Endothelial cell of umbilical vein (primary cell): ENCODE measurements at regions of chr13 and their contacts with region 1.

Region 1: GRCh38 chr13:113816946-113817859 is 46.7 kb downstream of the GAS6 start:
- DNase-seq: peak; percentile 91
- H3K4me3 ChIP-seq: no peak overlapping the region
- H3K27ac ChIP-seq: peak overlapping the region; percentile 34
- H3K4me1 ChIP-seq: peaks cover 6% of the 10 kb centered on the region
- H3K27me3 ChIP-seq: no peaks in the 10 kb centered on the region
- CTCF ChIP-seq: peak; percentile 70 to 93
- POLR2A ChIP-seq: no peak

Region 2: DNA sequence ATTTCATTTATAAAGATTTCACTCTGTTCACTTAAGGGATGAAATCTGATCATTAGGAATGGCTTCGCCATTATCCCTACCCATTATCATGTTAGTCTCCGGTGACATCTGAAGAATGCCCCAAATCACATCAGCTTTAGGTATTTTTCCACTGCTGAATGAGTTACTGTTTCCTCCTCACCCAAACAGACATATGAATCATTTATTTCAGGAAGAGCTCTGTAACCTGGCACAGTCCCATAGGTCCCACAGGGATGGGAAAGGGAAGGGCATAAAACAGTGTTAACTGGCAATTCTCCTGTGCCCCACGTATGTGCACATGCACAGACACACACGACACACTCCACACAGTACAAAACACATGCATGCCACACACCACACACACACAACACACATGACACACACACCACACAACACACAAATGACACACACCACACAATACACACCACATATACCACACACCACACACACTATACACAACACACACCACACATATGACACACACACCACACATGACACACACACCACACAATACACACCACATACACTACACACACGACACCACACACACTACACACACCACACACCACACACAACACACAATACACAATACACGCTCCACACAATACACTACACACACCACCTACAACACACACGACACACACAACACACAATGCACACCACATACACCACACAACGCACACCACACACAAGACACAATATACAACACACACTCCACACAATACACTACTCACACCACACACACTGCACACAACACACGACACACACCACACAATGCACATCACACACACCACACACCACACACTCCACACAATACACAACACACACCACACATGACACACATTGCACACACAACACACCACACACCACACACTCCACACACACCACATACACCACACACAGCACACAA is 42.8 kb before region 1 on chr13:
- CTCF ChIA-PET with region 1: no interaction called
- POLR2A ChIA-PET with region 1: no interaction called
- dilution Hi-C with region 1: no loop called
- intact Hi-C with region 1: no loop called
- DNase-seq: peak; percentile 95
- H3K4me3 ChIP-seq: no peak overlapping the region
- H3K27ac ChIP-seq: peak overlapping the region; percentile 38
- H3K4me1 ChIP-seq: peaks cover 39% of the 10 kb centered on the region
- H3K27me3 ChIP-seq: no peaks in the 10 kb centered on the region
- CTCF ChIP-seq: no peak
- POLR2A ChIP-seq: no peak

Region 3: DNA sequence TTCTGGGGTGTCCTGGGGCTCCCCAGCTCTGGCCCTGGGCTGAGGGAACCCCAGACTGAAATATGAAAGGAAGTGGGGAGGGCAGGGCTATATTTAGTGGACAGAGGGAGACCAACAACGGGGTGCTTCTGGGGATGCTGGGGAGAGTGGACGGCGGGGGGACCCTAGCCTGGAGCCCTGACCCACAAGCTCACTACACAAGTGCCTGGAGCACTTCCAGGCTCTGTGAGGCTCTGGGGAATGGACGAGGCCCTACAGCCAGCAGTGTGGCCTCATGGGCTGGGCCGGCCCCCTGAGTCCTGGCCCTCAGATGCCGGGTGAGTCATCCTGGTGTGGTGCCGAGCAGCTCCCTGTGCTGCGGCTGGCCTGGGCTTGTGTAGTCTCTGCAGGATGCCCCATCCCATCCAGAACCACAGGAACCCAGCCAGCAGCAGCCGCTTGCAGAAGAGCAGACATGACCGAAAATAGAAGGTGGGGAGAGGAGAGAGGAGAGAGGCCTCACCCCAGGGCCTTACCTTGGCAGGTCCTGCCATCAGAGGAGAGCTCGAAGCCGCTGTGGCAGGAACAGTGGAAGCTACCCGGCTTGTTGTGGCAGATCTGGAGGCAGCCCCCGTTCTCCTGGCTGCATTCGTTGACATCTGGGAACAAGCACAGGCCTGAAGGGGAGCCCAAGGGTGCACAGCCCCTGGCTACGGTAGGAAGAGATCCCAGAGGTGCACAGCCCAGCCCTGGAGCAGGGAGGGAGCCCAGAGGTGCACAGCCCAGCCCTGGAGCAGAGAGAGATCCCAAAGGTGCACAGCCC is 20.6 kb after region 1 on chr13:
- CTCF ChIA-PET with region 1: interaction called, 4 read pairs
- POLR2A ChIA-PET with region 1: no interaction called
- dilution Hi-C with region 1: no loop called
- intact Hi-C with region 1: loop called (anchors 1 kb)
- DNase-seq: peak; percentile 92
- H3K4me3 ChIP-seq: no peak overlapping the region
- H3K27ac ChIP-seq: peak overlapping the region; percentile 90
- H3K4me1 ChIP-seq: peaks cover 13% of the 10 kb centered on the region
- H3K27me3 ChIP-seq: no peaks in the 10 kb centered on the region
- CTCF ChIP-seq: no peak
- POLR2A ChIP-seq: peak; percentile 40

Region 4: DNA sequence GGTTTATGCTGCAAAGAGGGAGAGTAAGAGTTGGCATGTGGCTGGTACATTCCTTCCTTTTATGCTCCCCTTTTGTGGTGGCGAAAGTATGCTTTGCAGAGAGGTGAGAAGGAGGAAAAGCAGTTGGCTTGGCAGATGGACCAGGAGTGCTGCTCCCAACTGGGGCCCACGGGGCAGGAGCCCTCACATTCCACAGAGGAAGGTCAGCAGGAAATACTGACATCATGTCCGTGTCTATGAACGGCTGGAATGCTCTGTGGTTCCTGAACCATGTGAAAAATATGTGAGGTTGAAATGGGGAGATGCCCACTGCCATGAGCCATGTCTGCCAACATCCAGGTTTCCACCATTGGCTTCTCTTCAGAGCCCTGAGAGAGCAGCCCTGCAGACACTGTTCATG is 80.0 kb after region 1 on chr13:
- CTCF ChIA-PET with region 1: interaction called, 3 read pairs
- POLR2A ChIA-PET with region 1: no interaction called
- dilution Hi-C with region 1: no loop called
- intact Hi-C with region 1: loop called (anchors 2 kb)
- DNase-seq: peak; percentile 56
- H3K4me3 ChIP-seq: no peak overlapping the region
- H3K27ac ChIP-seq: peak overlapping the region; percentile 86
- H3K4me1 ChIP-seq: peaks cover 22% of the 10 kb centered on the region
- H3K27me3 ChIP-seq: no peaks in the 10 kb centered on the region
- CTCF ChIP-seq: no peak
- POLR2A ChIP-seq: peak; percentile 31

Region 5: DNA sequence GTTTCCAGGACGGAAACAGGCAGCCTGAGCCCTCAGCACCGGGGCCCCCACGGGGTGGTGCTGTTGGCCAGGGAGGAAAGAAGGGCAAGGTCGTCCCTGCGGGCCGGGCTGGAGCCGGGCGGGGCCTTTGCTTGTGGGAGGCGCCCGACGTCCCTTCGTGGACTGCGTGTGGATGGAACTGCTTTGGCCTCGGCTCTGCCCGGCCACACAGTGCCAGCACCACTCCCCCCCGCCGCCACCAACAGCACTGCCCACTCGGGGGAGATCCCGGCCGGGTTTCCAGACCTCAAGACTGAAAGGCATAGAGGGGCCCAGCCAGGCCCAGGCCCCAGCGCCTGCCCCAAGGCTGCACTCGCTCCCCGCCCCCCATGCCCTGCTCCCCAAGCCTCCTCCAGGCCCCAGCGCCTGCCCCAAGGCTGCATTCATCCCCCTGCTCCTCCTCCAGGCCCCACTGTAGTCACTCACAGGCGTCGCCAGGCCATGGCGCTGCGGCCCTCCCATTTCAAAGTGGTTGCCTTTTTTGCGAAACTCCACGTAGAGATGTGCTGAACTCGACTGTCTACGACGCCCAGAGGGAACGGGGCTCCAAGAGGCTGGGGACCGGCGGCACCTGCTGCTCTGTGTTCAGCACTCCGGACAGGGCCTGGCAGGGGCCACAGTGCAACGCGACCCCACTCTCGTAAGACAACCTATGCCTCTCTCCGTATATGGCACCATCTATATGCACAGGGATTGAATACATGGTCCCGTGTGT is 134.2 kb after region 1 on chr13:
- CTCF ChIA-PET with region 1: interaction called, 30 read pairs
- POLR2A ChIA-PET with region 1: no interaction called
- dilution Hi-C with region 1: no loop called
- intact Hi-C with region 1: loop called (anchors 1 kb)
- DNase-seq: peak; percentile 56
- H3K4me3 ChIP-seq: no peak overlapping the region
- H3K27ac ChIP-seq: no peak overlapping the region
- H3K4me1 ChIP-seq: no peaks in the 10 kb centered on the region
- H3K27me3 ChIP-seq: no peaks in the 10 kb centered on the region
- CTCF ChIP-seq: peak; percentile 79 to 90
- POLR2A ChIP-seq: no peak

Region 6: GRCh38 chr13:114226699-114227323 is 409.6 kb after region 1 on chr13:
- CTCF ChIA-PET with region 1: interaction called, 3 read pairs
- POLR2A ChIA-PET with region 1: no interaction called
- dilution Hi-C with region 1: no loop called
- intact Hi-C with region 1: loop called (anchors 1 kb)
- DNase-seq: peak; percentile 80
- H3K4me3 ChIP-seq: no peak overlapping the region
- H3K27ac ChIP-seq: no peak overlapping the region
- H3K4me1 ChIP-seq: peaks cover 10% of the 10 kb centered on the region
- H3K27me3 ChIP-seq: peaks cover 29% of the 10 kb centered on the region in 2 experiments
- CTCF ChIP-seq: peak; percentile 83 to 93
- POLR2A ChIP-seq: no peak